ENCODE measurements at regions of chr16 and their contacts with region 1.

Region 1: GRCh38 chr16:83344014-83344413 is 463.8 kb upstream of the HSBP1 start:
- DNase-seq: peak; percentile 98
- H3K4me3 ChIP-seq: peak overlapping the region in 1 of 3 experiments; percentile 4
- H3K27ac ChIP-seq: peak overlapping the region; percentile 97
- H3K4me1 ChIP-seq: peaks cover 28% of the 10 kb centered on the region
- H3K27me3 ChIP-seq: no peaks in the 10 kb centered on the region
- CTCF ChIP-seq: no peak
- POLR2A ChIP-seq: peak; percentile 37

Region 2: DNA sequence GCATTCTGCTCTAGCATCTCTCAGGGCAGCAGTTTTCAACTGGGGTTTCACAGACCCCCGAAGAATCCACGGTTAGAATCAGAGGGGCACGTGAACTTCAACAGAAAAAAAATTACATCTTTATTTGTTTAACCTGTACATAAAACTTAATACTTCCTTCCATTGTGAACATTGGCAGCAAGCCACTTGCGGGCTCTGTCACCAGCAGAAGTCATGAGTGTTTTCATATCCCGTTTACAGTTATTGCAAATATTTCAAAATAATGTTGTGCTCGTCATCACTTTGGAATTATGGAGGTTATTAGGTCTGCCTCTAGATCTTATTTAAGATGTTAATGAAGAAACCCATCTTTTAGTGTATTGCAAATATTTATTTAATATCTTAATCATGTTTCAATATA is 1442.5 kb before region 1 on chr16:
- CTCF ChIA-PET with region 1: no interaction called
- POLR2A ChIA-PET with region 1: no interaction called
- dilution Hi-C with region 1: no loop called
- intact Hi-C with region 1: loop called (anchors 10 kb)
- DNase-seq: peak; percentile 97
- H3K4me3 ChIP-seq: peak overlapping the region in 1 of 3 experiments; percentile 4
- H3K27ac ChIP-seq: peak overlapping the region; percentile 88
- H3K4me1 ChIP-seq: peaks cover 31% of the 10 kb centered on the region
- H3K27me3 ChIP-seq: no peaks in the 10 kb centered on the region
- CTCF ChIP-seq: no peak
- POLR2A ChIP-seq: peak; percentile 57

Region 3: DNA sequence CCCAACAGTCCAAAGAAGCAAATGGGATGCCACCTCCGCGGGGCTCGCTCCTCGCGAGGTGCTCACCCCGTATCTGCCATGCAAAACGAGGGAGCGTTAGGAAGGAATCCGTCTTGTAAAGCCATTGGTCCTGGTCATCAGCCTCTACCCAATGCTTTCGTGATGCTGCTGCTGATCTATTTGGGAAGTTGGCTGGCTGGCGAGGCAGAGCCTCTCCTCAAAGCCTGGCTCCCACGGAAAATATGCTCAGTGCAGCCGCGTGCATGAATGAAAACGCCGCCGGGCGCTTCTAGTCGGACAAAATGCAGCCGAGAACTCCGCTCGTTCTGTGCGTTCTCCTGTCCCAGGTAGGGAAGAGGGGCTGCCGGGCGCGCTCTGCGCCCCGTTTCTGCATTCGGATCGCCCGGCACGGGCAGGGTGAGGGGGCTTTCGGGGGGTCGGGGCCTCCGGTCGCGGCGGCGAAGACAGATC is 717.2 kb before region 1 on chr16 and contains the start of gene CDH13:
- CTCF ChIA-PET with region 1: no interaction called
- POLR2A ChIA-PET with region 1: no interaction called
- dilution Hi-C with region 1: no loop called
- intact Hi-C with region 1: loop called (anchors 2 kb)
- DNase-seq: peak; percentile 62
- H3K4me3 ChIP-seq: peak within 1 kb of the TSS; percentile 52 to 82 (median 66)
- H3K27ac ChIP-seq: peak within 1 kb of the TSS; percentile 96
- H3K4me1 ChIP-seq: peaks cover 46% of the 10 kb centered on the region
- H3K27me3 ChIP-seq: peaks cover 0 to 2% of the 10 kb centered on the region in 2 experiments
- CTCF ChIP-seq: no peak
- POLR2A ChIP-seq: no peak
- total RNA-seq, gene CDH13: 98.5 and 124 TPM in 2 replicates

Region 4: GRCh38 chr16:82755569-82756282 is 588.3 kb before region 1 on chr16:
- CTCF ChIA-PET with region 1: interaction called, 3 read pairs
- POLR2A ChIA-PET with region 1: no interaction called
- dilution Hi-C with region 1: no loop called
- intact Hi-C with region 1: loop called (anchors 1 kb)
- DNase-seq: no peak
- H3K4me3 ChIP-seq: no peak overlapping the region
- H3K27ac ChIP-seq: peak overlapping the region; percentile 92
- H3K4me1 ChIP-seq: peaks cover 59% of the 10 kb centered on the region
- H3K27me3 ChIP-seq: no peaks in the 10 kb centered on the region
- CTCF ChIP-seq: peak in 1 of 2 donors; percentile 7
- POLR2A ChIP-seq: no peak

Region 5: GRCh38 chr16:83305092-83305491 is 38.9 kb before region 1 on chr16:
- CTCF ChIA-PET with region 1: interaction called, 6 read pairs
- POLR2A ChIA-PET with region 1: no interaction called
- dilution Hi-C with region 1: no loop called
- intact Hi-C with region 1: loop called (anchors 1 kb)
- DNase-seq: peak; percentile 82
- H3K4me3 ChIP-seq: no peak overlapping the region
- H3K27ac ChIP-seq: peak overlapping the region; percentile 97
- H3K4me1 ChIP-seq: peaks cover 36% of the 10 kb centered on the region
- H3K27me3 ChIP-seq: no peaks in the 10 kb centered on the region
- CTCF ChIP-seq: no peak
- POLR2A ChIP-seq: no peak

Region 6: DNA sequence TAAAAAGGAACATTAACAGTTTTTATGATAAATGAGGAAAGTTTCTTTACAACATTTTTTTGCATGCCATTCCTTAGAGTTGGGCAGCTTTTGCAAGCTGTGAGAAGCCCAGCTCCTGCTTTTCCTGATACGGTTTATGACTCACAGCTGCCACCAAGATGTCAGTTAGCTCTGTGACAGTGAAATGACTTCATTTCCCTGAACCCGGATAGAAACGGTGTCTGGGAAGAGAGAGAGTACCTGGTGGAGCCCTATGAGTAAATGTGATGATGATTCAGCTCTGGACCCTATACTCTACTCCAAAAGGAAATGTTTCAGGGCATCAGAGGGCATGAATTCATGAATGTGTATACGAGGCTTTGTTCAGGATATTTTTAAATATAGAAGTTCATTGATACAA is 97.5 kb after region 1 on chr16:
- CTCF ChIA-PET with region 1: no interaction called
- POLR2A ChIA-PET with region 1: no interaction called
- dilution Hi-C with region 1: no loop called
- intact Hi-C with region 1: no loop called
- DNase-seq: peak; percentile 22
- H3K4me3 ChIP-seq: no peak overlapping the region
- H3K27ac ChIP-seq: no peak overlapping the region
- H3K4me1 ChIP-seq: no peaks in the 10 kb centered on the region
- H3K27me3 ChIP-seq: no peaks in the 10 kb centered on the region
- CTCF ChIP-seq: no peak
- POLR2A ChIP-seq: no peak